SK-N-SH (cell line): ENCODE measurements at regions of chr10 and their contacts with region 1.

Region 1: GRCh38 chr10:84626397-84627087 is 298.2 kb downstream of the CCSER2 start:
- DNase-seq: no peak
- H3K4me3 ChIP-seq: no peak overlapping the region
- H3K27ac ChIP-seq: no peak overlapping the region
- H3K4me1 ChIP-seq: no peaks in the 10 kb centered on the region
- H3K27me3 ChIP-seq: no peaks in the 10 kb centered on the region
- CTCF ChIP-seq: no peak
- EP300 ChIP-seq: no peak
- RAD21 ChIP-seq: no peak

Region 2: DNA sequence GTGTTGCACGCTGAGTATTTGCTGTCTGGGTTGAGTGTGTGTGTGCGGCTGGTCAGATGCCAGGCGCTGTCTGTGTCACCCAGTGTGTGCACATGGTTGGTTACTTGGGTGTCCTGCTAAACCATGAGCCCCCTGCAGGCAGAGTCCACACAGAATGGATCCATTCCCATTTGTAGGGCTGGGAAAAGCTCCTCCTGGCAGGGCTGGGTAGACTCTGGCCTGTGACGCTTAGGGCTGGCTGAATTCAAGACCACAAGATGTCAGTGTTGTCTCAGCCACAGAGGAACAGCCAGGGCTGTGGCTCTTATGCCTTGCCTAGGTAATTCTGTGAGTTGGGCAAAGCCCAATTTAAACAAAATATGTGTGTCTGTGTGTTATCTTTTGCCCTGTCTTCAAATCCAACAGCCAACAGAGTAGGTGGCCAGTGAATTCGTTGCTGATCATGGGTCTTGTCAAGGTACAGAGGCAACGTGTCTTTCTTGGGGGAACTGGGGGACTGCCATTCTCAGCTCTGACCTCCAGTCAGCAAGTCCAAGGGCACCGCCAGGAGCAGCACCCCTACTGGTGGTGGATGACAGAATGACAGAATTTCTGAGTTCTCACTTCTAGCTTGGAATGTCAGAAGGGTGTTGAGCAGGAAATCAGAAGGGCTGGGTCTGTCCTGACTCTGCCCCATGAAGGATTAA is 13.1 kb before region 1 on chr10:
- CTCF ChIA-PET with region 1: interaction called, 10 read pairs
- POLR2A ChIA-PET with region 1: no interaction called
- DNase-seq: peak; percentile 63
- H3K4me3 ChIP-seq: peak overlapping the region in 1 of 2 experiments; percentile 43; a peak in 1 of 4 replicates
- H3K27ac ChIP-seq: no peak overlapping the region
- H3K4me1 ChIP-seq: no peaks in the 10 kb centered on the region; a peak in 1 of 4 replicates
- H3K27me3 ChIP-seq: no peaks in the 10 kb centered on the region
- CTCF ChIP-seq: 0 out of 2 replicates have a peak, but pooled peaks have one; percentile 17
- EP300 ChIP-seq: no peak
- RAD21 ChIP-seq: peak; percentile 75

Region 3: DNA sequence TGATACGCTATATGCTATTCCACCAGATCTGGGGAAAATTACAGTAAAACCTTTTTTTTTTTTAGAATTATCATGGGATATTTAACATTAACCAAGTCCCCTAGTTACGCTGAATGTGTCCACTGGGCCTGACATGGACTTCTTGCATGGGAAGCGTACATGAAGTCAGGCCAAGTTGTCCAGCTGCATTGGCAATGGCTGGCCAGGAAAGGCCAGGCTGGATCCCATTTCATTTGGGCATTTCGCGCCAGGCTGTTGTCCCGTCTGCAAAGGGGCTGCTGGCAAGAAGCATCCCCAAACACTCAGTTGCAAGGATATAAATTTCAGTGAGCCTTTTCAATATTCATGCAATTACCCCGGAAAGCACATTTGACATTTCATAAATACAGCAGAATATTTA is 806.7 kb after region 1 on chr10:
- CTCF ChIA-PET with region 1: no interaction called
- POLR2A ChIA-PET with region 1: no interaction called
- DNase-seq: no peak
- H3K4me3 ChIP-seq: no peak overlapping the region
- H3K27ac ChIP-seq: no peak overlapping the region
- H3K4me1 ChIP-seq: peaks cover 0 to 8% of the 10 kb centered on the region in 2 experiments; a peak in 1 of 4 replicates
- H3K27me3 ChIP-seq: no peaks in the 10 kb centered on the region
- CTCF ChIP-seq: no peak
- EP300 ChIP-seq: no peak
- RAD21 ChIP-seq: no peak